ENCODE measurements at regions of chr9 and their contacts with region 1.

Region 1: GRCh38 chr9:122988919-122989621 is 44.4 kb upstream of the GPR21 start:
- DNase-seq: no peak
- ATAC-seq: no peak
- H3K4me3 ChIP-seq: no peak overlapping the region
- H3K4me1 ChIP-seq: peaks cover 3% of the 10 kb centered on the region
- CTCF ChIP-seq: no peak

Region 2: DNA sequence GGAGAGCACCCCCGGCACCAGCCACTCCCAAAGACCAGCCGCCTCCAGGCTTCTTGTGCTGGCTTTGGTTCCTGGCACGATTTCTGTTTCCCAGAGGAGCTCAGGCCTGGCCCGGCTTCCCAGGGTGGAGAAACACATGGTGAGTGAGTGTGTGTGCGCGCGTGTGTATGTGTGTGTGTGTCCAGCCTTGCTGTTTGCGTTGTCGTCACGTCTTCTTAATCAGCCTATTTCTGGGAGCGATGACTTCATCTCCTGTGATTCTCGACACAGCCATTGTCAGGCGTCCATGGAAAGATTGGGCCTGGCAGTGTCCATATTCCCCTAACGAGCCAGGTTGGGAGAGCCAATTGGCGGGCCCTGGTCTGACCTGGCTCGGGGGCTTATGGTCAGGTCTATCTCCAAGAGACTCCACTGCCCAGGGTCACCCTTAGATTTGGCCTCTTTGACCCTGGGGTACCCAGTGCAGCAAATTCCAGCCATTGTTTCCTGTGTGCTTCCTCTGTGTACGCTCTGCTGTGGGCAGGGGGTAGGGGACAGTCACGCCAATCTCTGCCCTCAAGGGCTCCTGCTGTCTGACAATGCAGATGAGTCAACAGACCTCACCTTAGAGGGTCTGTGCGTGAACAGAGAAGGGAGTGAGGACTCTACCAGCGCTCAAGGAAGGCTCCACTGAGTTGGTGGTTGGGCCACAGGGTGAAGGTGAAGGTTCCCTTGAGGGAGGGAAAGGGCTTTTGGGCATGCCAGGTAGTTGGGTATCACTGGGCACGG is 1263.9 kb before region 1 on chr9:
- intact Hi-C with region 1: loop called in 1 of 2 experiments (anchors 10 kb)
- DNase-seq: peak; percentile 69 to 82 (median 74)
- ATAC-seq: no peak
- H3K4me3 ChIP-seq: no peak overlapping the region
- H3K4me1 ChIP-seq: peaks cover 30% of the 10 kb centered on the region
- CTCF ChIP-seq: no peak

Region 3: DNA sequence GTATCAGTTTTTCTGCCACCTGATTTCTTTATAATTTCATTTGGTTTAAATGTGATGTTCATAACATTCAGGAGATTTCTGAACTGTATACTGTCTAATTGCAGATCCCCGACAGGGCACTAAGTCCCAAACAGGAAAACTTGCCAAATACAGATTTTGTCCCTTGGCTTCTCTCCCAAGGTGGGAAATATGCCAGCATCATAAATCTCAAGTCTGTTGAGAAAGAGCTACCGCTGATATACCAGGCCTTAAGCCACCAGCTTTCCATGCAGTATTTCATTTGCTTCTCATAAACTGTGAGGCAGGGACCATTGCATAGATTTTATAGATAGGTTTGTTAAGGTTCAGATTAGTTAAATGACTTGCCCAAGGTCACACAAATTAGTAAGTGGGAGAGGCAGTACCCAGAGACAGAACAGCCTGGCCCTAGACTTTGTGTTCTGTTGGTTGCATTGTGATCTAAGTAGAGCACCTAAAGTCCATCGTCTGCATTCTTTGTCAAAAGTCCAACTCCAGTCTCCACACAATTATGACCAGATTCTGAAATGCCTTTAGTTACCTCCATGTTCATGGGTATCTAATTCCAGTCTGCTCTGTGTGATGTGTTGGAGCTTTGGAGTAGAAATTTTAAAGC is 60.6 kb after region 1 on chr9:
- intact Hi-C with region 1: no loop called
- DNase-seq: peak in 1 of 3 donors; percentile 65
- ATAC-seq: peak; percentile 89
- H3K4me3 ChIP-seq: no peak overlapping the region
- H3K4me1 ChIP-seq: peaks cover 10% of the 10 kb centered on the region
- CTCF ChIP-seq: no peak

Region 4: DNA sequence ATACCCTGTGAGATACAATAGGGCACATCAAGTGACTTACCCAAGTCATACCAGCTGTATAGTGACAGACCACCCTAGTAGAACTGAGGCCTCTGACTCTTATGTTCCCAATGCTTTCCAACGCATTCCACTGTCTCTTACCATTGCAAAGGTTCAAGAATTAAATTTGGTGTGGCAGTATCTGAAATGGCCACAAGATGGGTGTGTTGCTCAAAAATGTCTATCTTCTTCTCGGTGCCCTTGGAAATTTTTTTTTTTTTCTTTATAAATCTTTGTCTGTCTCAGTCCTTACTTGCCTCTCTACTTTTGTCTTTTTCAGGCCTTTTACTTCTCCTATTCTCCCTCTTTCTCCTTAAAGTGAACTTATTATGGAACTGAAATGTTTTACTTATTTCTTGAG is 92.8 kb after region 1 on chr9:
- intact Hi-C with region 1: no loop called
- DNase-seq: peak in 1 of 3 donors; percentile 37
- ATAC-seq: peak; percentile 33
- H3K4me3 ChIP-seq: no peak overlapping the region
- H3K4me1 ChIP-seq: no peaks in the 10 kb centered on the region
- CTCF ChIP-seq: no peak

Measured in mucosa of descending colon (tissue), 3 donors.